CD4-positive, alpha-beta memory T cell (primary cell): ENCODE measurements at regions of chr4 and their contacts with region 1.

Region 1: DNA sequence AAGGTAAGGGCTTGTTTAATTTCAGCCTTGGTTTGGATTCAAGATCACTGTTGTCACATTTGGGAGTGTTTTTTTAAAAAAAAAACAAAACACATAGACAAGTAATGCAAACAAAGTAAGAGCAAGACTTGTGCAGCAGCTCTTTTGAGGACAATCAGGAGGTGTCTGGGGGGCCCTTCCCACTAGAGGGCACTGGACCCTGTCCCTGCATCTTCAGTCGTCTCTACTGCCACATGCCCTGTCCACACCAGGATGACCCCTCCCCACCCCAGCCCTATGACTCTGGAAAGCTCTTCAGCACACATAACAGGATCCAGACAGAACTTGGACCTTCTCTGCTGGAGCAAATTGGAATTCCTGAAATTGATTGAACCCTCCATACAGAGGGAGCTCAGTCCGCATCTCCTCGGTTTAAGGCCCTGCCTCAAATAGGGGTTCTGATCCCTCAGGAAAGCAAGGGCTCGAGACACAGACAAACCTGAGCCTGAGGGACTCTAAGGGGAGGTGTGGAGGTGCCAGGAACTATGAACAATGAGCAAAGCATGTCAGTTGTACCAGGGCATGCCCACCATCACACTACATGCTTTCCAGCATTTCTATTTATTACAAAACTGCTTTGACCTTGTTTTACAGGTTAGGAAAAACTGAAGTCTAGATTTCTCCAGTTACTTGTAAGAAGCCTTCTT is 70.9 kb downstream of the USP46 start:
- DNase-seq: peak in 3 of 5 donors; percentile 6 to 32 (median 12)
- H3K4me3 ChIP-seq: no peak overlapping the region
- H3K4me3 Mint-ChIP-seq: peak overlapping the region in 6 of 8 donors; percentile 5 to 72 (median 48)
- H3K27ac ChIP-seq: no peak overlapping the region
- H3K27ac Mint-ChIP-seq: peak overlapping the region; percentile 80 to 95 (median 85)
- H3K4me1 ChIP-seq: peaks cover 30% of the 10 kb centered on the region
- H3K4me1 Mint-ChIP-seq: peaks cover 28 to 40% (median 35%) of the 10 kb centered on the region in 4 donors
- H3K27me3 ChIP-seq: no peaks in the 10 kb centered on the region
- H3K27me3 Mint-ChIP-seq: peaks cover 0 to 2% of the 10 kb centered on the region in 2 donors

Region 2: DNA sequence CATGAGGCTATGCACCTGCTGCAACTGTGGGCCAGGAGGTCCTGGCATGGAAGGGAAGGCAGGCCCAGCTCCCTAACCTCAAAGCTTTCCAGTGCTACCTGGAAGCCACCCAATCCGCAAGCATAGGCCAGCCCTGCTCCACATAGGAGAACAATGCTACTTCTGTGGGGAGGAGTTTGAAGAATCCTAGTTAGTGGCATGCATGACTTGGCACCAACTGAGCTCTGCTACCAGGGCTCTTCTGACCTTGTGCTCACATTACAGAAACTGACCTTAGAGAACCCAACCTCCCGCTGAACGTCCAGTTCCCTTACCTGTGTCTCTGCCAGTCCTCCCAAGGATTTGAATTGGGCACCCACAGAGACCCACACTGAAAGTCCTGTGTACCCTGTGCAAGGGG is 12.0 kb after region 1 on chr4:
- CTCF ChIA-PET with region 1: interaction called, 12 read pairs
- POLR2A ChIA-PET with region 1: no interaction called
- intact Hi-C with region 1: no loop called
- DNase-seq: no peak
- H3K4me3 ChIP-seq: no peak overlapping the region
- H3K4me3 Mint-ChIP-seq: no peak overlapping the region
- H3K27ac ChIP-seq: no peak overlapping the region
- H3K27ac Mint-ChIP-seq: peak overlapping the region in 1 of 7 donors; percentile 9
- H3K4me1 ChIP-seq: no peaks in the 10 kb centered on the region
- H3K4me1 Mint-ChIP-seq: no peaks in the 10 kb centered on the region
- H3K27me3 ChIP-seq: no peaks in the 10 kb centered on the region
- H3K27me3 Mint-ChIP-seq: no peaks in the 10 kb centered on the region

Region 3: DNA sequence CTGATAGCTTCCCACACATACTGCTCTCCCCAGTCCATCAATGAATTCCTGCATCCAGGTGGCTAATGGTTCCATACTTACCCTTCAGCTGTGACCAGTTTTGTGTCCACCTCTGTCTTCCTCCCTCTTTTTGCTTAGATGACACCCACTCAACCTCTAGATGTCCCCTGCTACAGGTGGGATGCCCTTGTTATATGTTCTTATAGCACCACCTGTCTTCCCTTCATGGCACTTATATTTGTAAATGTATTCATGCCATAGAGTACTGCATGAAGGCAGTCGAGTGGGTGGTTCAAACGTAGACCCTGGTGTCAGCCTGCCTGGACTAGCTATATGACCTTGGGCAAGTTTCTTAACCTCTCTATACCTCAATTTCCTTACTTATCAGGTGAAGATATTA is 77.4 kb after region 1 on chr4:
- CTCF ChIA-PET with region 1: interaction called, 22 read pairs
- POLR2A ChIA-PET with region 1: interaction called, 19 read pairs
- intact Hi-C with region 1: no loop called
- DNase-seq: peak in 4 of 5 donors; percentile 14 to 31 (median 28)
- H3K4me3 ChIP-seq: no peak overlapping the region
- H3K4me3 Mint-ChIP-seq: no peak overlapping the region
- H3K27ac ChIP-seq: no peak overlapping the region
- H3K27ac Mint-ChIP-seq: peak overlapping the region in 1 of 7 donors; percentile 19
- H3K4me1 ChIP-seq: peaks cover 2% of the 10 kb centered on the region
- H3K4me1 Mint-ChIP-seq: peaks cover 4 to 10% (median 7%) of the 10 kb centered on the region in 4 donors
- H3K27me3 ChIP-seq: no peaks in the 10 kb centered on the region
- H3K27me3 Mint-ChIP-seq: peaks cover 6 to 10% of the 10 kb centered on the region in 2 donors

Region 4: GRCh38 chr4:52957220-52957686 is 369.0 kb after region 1 on chr4:
- CTCF ChIA-PET with region 1: no interaction called
- POLR2A ChIA-PET with region 1: no interaction called
- intact Hi-C with region 1: no loop called
- DNase-seq: no peak
- H3K4me3 ChIP-seq: no peak overlapping the region
- H3K4me3 Mint-ChIP-seq: no peak overlapping the region
- H3K27ac ChIP-seq: no peak overlapping the region
- H3K27ac Mint-ChIP-seq: no peak overlapping the region
- H3K4me1 ChIP-seq: no peaks in the 10 kb centered on the region
- H3K4me1 Mint-ChIP-seq: peaks cover 0 to 2% (median 0%) of the 10 kb centered on the region in 4 donors
- H3K27me3 ChIP-seq: no peaks in the 10 kb centered on the region
- H3K27me3 Mint-ChIP-seq: no peaks in the 10 kb centered on the region

Region 5: DNA sequence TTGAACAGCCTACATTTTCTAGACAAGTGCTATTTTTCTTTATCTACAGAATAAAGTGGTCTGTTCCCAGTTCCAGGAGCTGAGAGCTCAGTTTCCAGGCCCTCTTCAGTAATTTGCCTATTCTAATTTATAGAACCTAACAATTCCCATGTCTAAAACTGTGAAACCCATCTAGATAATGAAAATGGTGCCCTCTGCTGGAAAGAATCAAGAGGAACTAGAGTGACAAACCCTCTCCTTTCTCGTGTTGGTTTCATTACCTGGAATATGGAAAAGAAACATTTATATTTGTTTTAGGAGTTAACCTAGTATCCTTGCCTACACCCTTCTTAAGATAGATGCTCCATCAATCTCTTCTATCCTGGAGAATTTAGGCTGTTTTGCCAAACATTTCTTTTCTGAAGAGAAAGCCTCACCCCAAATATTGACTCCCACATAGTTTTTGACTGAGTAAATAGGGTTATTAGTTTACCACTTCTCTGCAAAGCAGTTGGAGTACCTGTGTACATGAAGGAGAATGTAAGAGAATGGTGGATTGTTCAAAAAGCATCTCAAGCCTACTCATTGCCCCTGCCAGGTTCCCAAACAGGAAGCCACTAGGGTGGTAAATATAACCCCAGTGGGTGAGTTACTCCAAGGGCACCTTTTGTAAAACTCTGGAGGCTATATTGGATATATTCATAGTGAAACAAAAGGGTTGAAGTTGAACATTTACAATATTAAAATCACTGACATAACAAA is 395.5 kb after region 1 on chr4:
- CTCF ChIA-PET with region 1: interaction called, 7 read pairs
- POLR2A ChIA-PET with region 1: no interaction called
- intact Hi-C with region 1: loop called (anchors 1 kb)
- DNase-seq: peak in 4 of 5 donors; percentile 37 to 50 (median 40)
- H3K4me3 ChIP-seq: no peak overlapping the region
- H3K4me3 Mint-ChIP-seq: no peak overlapping the region
- H3K27ac ChIP-seq: no peak overlapping the region
- H3K27ac Mint-ChIP-seq: no peak overlapping the region
- H3K4me1 ChIP-seq: no peaks in the 10 kb centered on the region
- H3K4me1 Mint-ChIP-seq: peaks cover 0 to 4% (median 0%) of the 10 kb centered on the region in 4 donors
- H3K27me3 ChIP-seq: no peaks in the 10 kb centered on the region
- H3K27me3 Mint-ChIP-seq: no peaks in the 10 kb centered on the region